ENCODE measurements at regions of chr11 and their contacts with region 1.

Region 1: DNA sequence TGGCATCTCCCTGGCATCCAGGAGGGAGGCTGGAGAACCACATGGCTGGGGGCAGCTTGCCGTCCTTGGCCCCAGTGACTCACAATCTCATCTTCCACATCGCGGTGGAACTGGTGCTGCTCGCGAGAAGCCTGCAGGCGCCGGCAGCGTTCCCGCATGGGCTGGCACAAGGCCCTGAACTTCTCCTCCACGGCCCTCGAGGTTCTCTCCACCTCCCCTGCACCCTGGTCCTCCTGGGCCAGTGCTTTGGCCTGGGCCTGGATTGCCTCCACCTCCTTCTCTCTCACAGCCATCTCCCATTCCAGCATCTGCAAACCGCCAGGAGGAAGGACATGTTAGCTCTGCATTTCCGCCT is 16.3 kb upstream of the RBM4B start:
- DNase-seq: no peak
- H3K4me3 Mint-ChIP-seq: no peak overlapping the region
- H3K27ac Mint-ChIP-seq: no peak overlapping the region
- H3K4me1 Mint-ChIP-seq: no peaks in the 10 kb centered on the region
- H3K27me3 Mint-ChIP-seq: no peaks in the 10 kb centered on the region

Region 2: GRCh38 chr11:66720223-66720947 is 26.4 kb after region 1 on chr11:
- CTCF ChIA-PET with region 1: no interaction called
- POLR2A ChIA-PET with region 1: no interaction called
- DNase-seq: peak; percentile 60
- H3K4me3 Mint-ChIP-seq: peak overlapping the region; percentile 26
- H3K27ac Mint-ChIP-seq: peak overlapping the region; percentile 52
- H3K4me1 Mint-ChIP-seq: peaks cover 16% of the 10 kb centered on the region
- H3K27me3 Mint-ChIP-seq: peaks cover 18% of the 10 kb centered on the region

Region 3: DNA sequence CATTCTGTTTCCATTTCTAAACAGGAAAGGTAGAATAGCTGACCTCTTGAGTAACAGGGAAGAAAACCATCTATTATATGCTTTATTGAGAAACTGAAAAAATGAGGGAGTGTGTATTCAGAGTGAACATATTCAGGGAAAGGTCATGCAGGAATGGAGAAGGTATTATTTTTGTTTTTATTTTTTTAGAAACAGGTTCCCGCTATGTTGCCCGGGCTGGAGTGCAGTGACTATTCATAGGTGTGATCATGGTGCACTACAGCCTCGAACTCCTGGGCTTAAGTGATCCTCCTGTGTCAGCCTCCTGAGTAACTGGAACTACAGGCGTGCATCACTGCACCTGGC is 140.4 kb after region 1 on chr11:
- CTCF ChIA-PET with region 1: interaction called, 16 read pairs
- POLR2A ChIA-PET with region 1: no interaction called
- DNase-seq: no peak
- H3K4me3 Mint-ChIP-seq: no peak overlapping the region
- H3K27ac Mint-ChIP-seq: no peak overlapping the region
- H3K4me1 Mint-ChIP-seq: peaks cover 5% of the 10 kb centered on the region
- H3K27me3 Mint-ChIP-seq: no peaks in the 10 kb centered on the region

Measured in activated CD4-positive, alpha-beta T cell treated with anti-CD3 and anti-CD28 coated beads, Interleukin-2, amount 10 ng/mL, durations not matched to agents 7 days and 5 days (primary cell).